ENCODE measurements at regions of chr5 and their contacts with region 1.

Region 1: GRCh38 chr5:36269479-36270219 is 27.9 kb upstream of the NADK2 start:
- DNase-seq: no peak
- ATAC-seq: no peak
- H3K4me3 Mint-ChIP-seq: no peak overlapping the region
- H3K27ac Mint-ChIP-seq: no peak overlapping the region
- H3K4me1 Mint-ChIP-seq: no peaks in the 10 kb centered on the region
- H3K27me3 Mint-ChIP-seq: peaks cover 4% of the 10 kb centered on the region

Region 2: DNA sequence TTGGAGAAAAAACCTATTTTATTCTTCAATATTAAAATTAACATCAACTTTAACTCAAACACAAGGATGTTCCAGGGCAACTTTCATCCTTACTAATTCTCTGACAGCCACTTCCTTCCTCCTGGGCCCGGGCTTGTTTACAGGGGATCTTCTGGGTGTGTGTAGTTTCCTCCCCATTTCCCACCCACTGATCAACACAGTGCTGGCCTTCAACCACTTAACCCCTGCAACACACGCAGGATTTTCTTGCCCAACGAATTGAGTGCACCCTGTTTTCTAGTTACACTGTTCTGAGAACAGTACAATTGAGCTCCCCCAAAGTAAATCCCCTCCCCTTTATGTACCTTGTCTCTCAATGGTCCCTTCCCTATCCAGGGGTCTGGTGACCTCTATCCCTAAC is 115.2 kb after region 1 on chr5:
- CTCF ChIA-PET with region 1: no interaction called
- POLR2A ChIA-PET with region 1: no interaction called
- intact Hi-C with region 1: no loop called
- DNase-seq: no peak
- ATAC-seq: no peak
- H3K4me3 Mint-ChIP-seq: no peak overlapping the region
- H3K27ac Mint-ChIP-seq: no peak overlapping the region
- H3K4me1 Mint-ChIP-seq: no peaks in the 10 kb centered on the region
- H3K27me3 Mint-ChIP-seq: no peaks in the 10 kb centered on the region

Region 3: GRCh38 chr5:36397901-36398536 is 128.4 kb after region 1 on chr5:
- CTCF ChIA-PET with region 1: no interaction called
- POLR2A ChIA-PET with region 1: no interaction called
- intact Hi-C with region 1: loop called in 1 of 2 experiments (anchors 5 kb)
- DNase-seq: no peak
- ATAC-seq: no peak
- H3K4me3 Mint-ChIP-seq: no peak overlapping the region
- H3K27ac Mint-ChIP-seq: no peak overlapping the region
- H3K4me1 Mint-ChIP-seq: no peaks in the 10 kb centered on the region
- H3K27me3 Mint-ChIP-seq: no peaks in the 10 kb centered on the region